H1 (cell line): ENCODE measurements at regions of chr11 and their contacts with region 1.

Region 1: GRCh38 chr11:64152841-64153691 is 12.8 kb downstream of the MACROD1 start:
- DNase-seq: peak in 1 of 2 experiments; percentile 94
- H3K4me3 ChIP-seq: no peak overlapping the region
- H3K27ac ChIP-seq: no peak overlapping the region
- H3K4me1 ChIP-seq: peaks cover 2 to 19% (median 10%) of the 10 kb centered on the region in 4 experiments; a peak in 6 of 7 replicates
- H3K27me3 ChIP-seq: peaks cover 0 to 16% (median 0%) of the 10 kb centered on the region in 4 experiments; a peak in 2 of 7 replicates
- CTCF ChIP-seq: peak in 2 of 3 experiments; percentile 94 to 95; a peak in 3 of 4 replicates
- EP300 ChIP-seq: no peak
- POLR2A ChIP-seq: no peak
- RAD21 ChIP-seq: peak; percentile 80 to 89

Region 2: GRCh38 chr11:64000026-64000739 is 152.9 kb before region 1 on chr11:
- CTCF ChIA-PET with region 1: interaction called, 171 read pairs
- POLR2A ChIA-PET with region 1: interaction called, 3 read pairs
- DNase-seq: peak in 1 of 2 experiments; percentile 91
- H3K4me3 ChIP-seq: peak overlapping the region; percentile 14 to 61 (median 47)
- H3K27ac ChIP-seq: no peak overlapping the region
- H3K4me1 ChIP-seq: peaks cover 2 to 23% (median 12%) of the 10 kb centered on the region in 4 experiments; a peak in 6 of 7 replicates
- H3K27me3 ChIP-seq: peaks cover 5 to 36% (median 24%) of the 10 kb centered on the region in 4 experiments
- CTCF ChIP-seq: peak in 2 of 3 experiments; percentile 57 to 92; a peak in 3 of 4 replicates
- EP300 ChIP-seq: no peak
- POLR2A ChIP-seq: no peak
- RAD21 ChIP-seq: peak; percentile 69 to 84

Region 3: DNA sequence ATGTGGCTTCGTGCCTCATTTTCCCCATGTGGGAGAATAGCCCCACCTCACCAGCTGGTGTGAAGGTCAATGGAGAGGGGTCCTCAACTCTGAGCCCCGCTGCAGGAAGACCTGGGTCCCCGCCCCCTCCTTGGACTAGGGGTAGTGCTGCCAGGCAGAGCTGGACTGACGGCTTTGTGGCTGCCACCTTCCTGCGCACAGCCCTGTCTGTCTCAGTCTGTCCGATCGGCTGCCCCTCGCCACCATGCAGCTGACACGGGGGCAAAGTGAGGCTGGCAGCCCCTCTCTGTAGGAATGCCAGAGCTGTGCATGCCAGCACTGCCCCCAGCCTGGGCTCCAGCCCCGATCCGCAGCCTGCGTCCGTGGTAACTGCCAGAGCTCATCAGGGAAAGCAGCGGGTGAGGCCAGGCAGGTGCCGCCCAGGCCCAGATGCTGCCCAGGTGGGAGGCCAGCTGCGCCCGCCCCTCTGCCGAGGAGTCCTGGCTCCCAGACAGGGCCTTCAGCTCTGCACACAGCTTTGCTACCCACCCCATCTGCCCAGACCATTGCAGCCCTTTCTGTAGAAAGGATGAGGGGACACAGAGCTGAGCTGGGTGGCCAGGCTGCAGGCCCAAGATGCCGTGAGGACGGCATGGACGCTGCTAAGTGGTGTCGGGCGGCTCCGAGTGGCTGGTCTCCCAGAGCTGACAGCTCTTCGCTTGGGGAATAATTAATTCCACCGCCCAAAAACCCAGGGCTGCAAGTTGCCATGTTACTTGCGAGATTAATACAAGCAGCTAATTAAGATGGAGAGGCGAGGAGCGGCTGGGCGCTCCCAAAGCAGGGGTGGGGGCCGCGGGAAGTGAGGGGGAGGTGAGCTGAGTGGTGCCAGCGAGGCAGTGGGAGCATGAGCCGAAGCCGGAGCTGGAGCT is 136.9 kb before region 1 on chr11:
- CTCF ChIA-PET with region 1: interaction called, 50 read pairs
- POLR2A ChIA-PET with region 1: no interaction called
- DNase-seq: no peak
- H3K4me3 ChIP-seq: no peak overlapping the region
- H3K27ac ChIP-seq: no peak overlapping the region
- H3K4me1 ChIP-seq: peaks cover 0 to 13% (median 7%) of the 10 kb centered on the region in 4 experiments; a peak in 6 of 7 replicates
- H3K27me3 ChIP-seq: peaks cover 2 to 56% (median 32%) of the 10 kb centered on the region in 4 experiments
- CTCF ChIP-seq: no peak
- EP300 ChIP-seq: no peak
- POLR2A ChIP-seq: no peak
- RAD21 ChIP-seq: no peak

Region 4: GRCh38 chr11:64048042-64048854 is 104.8 kb before region 1 on chr11:
- CTCF ChIA-PET with region 1: interaction called, 291 read pairs
- POLR2A ChIA-PET with region 1: no interaction called
- DNase-seq: no peak
- H3K4me3 ChIP-seq: no peak overlapping the region
- H3K27ac ChIP-seq: no peak overlapping the region
- H3K4me1 ChIP-seq: peaks cover 2 to 10% (median 7%) of the 10 kb centered on the region in 4 experiments
- H3K27me3 ChIP-seq: peaks cover 1 to 68% (median 43%) of the 10 kb centered on the region in 4 experiments
- CTCF ChIP-seq: no peak
- EP300 ChIP-seq: no peak
- POLR2A ChIP-seq: no peak
- RAD21 ChIP-seq: no peak

Region 5: DNA sequence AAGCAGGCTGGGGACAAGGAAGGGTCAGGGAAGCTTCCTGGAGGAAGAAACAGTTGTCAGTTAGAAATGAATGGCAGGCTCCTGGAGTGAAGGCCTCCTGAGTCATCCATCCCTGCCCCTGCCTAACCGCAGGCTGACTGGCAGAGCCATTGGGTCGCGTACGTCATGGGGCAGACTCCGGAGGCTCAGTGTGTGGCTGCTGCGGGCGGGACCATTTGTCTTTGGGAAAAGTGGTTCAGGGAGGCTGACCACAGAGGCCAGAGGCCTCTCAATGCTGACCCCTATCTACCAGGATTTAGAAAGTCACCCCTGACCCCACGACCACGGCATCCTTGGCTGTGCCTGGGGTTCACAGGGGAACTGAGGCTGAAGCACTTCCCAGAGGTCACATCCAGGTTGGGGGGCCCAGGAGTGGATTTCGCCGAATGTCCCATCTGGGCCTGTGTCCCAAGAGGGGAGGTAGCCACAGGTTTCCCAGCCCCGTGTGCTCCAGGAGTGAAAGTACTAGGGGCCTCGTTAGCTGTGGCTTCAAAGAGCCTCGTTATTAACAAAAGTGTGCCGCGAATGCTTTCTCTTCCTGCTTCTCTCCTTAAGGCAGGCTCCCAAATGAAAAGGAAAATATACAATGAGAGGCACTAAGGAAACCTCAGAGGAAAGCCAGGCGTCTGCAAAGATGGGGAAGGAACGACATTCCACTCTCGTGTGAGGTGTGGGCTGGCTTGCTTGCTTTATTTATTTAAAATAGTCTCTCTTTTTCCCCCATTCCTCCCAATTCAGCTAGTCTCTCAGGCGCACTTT is 58.4 kb before region 1 on chr11:
- CTCF ChIA-PET with region 1: interaction called, 126 read pairs
- POLR2A ChIA-PET with region 1: no interaction called
- DNase-seq: no peak
- H3K4me3 ChIP-seq: no peak overlapping the region
- H3K27ac ChIP-seq: no peak overlapping the region
- H3K4me1 ChIP-seq: peaks cover 0 to 8% (median 5%) of the 10 kb centered on the region in 4 experiments; a peak in 6 of 7 replicates
- H3K27me3 ChIP-seq: peaks cover 0 to 65% (median 48%) of the 10 kb centered on the region in 4 experiments; a peak in 6 of 7 replicates
- CTCF ChIP-seq: peak in 2 of 3 experiments; percentile 14 to 31; a peak in 1 of 4 replicates
- EP300 ChIP-seq: no peak
- POLR2A ChIP-seq: no peak
- RAD21 ChIP-seq: peak in 1 of 2 experiments; percentile 11; a peak in 1 of 4 replicates

Region 6: GRCh38 chr11:64131683-64132190 is 21.3 kb before region 1 on chr11:
- CTCF ChIA-PET with region 1: interaction called, 165 read pairs
- POLR2A ChIA-PET with region 1: no interaction called
- DNase-seq: no peak
- H3K4me3 ChIP-seq: no peak overlapping the region
- H3K27ac ChIP-seq: no peak overlapping the region
- H3K4me1 ChIP-seq: peaks cover 0 to 14% (median 9%) of the 10 kb centered on the region in 4 experiments; a peak in 5 of 7 replicates
- H3K27me3 ChIP-seq: peaks cover 0 to 35% (median 16%) of the 10 kb centered on the region in 4 experiments; a peak in 5 of 7 replicates
- CTCF ChIP-seq: no peak
- EP300 ChIP-seq: no peak
- POLR2A ChIP-seq: no peak
- RAD21 ChIP-seq: no peak